ENCODE measurements at regions of chr4 and their contacts with region 1.

Region 1: DNA sequence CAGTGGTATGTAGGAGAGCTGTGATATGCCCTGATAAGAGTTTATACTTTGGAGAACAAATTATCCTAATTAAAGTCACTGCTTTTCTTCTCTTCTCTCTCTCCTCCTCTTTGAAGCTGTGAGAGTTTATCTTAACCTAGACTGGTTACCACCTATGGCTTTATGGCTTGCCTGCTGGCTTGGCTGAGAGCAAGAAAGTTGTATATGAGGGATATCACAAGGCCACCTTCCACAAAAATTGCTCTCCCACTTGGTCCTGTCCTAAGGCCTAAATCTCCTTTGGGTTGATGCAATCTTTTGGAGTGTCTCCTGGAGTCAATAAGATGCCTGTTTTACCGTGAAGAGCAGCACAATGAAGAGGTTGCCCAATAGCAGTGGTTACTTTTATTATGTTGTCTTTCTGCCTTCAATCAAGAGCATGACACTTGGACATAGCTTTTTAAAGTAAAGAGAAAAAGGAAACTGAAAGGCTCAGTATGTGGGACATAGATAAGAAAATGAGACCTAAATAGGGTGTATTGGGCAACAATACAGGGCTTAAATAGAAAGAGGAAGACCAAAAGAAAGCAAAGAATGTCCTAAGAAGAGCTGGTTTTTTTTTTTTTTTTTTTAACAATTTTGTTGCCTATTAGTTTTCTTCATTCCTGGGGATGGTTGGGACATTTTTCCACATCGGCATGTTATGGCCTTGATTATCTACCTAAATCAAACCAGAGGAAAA is 9.2 kb downstream of the GUCY1A1 start:
- DNase-seq: no peak
- H3K4me3 ChIP-seq: peak overlapping the region in 1 of 2 donors; percentile 49
- H3K27ac ChIP-seq: peak overlapping the region; percentile 58 to 67
- H3K4me1 ChIP-seq: peaks cover 0 to 50% of the 10 kb centered on the region in 2 donors
- H3K27me3 ChIP-seq: no peaks in the 10 kb centered on the region
- CTCF ChIP-seq: no peak

Region 2: DNA sequence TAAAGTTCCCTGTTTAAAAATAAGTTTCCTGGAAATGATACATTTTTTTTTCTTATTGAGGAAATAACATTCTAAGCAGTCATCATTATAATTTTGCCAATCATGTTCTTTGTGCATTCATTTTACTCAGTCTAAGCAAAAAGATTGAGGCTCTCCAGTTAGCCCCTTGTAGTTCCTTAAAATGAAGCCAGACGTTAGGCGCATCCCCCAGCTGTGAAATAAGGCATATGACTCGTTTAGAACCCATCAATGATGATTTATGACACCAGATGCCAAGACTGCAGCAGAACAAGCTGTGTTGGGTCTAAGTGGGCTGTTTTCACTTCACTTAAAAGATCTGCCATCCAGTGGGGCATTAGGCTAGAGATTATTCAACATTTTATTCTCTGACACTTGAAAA is 1278.7 kb after region 1 on chr4:
- intact Hi-C with region 1: loop called (anchors 10 kb)
- DNase-seq: no peak
- H3K4me3 ChIP-seq: no peak overlapping the region
- H3K27ac ChIP-seq: peak overlapping the region in 1 of 2 donors; percentile 48
- H3K4me1 ChIP-seq: peaks cover 4 to 45% of the 10 kb centered on the region in 2 donors
- H3K27me3 ChIP-seq: no peaks in the 10 kb centered on the region
- CTCF ChIP-seq: no peak